Activated CD8-positive, alpha-beta T cell treated with anti-CD3 and anti-CD28 coated beads, Interleukin-2, amount 10 ng/mL, durations not matched to agents 7 days and 5 days (primary cell): ENCODE measurements at regions of chr3 and their contacts with region 1.

Region 1: GRCh38 chr3:45105855-45106671 is 40.1 kb downstream of the CDCP1 start:
- DNase-seq: peak; percentile 91
- ATAC-seq: peak; percentile 85
- H3K4me3 Mint-ChIP-seq: peak overlapping the region; percentile 16
- H3K27ac Mint-ChIP-seq: peak overlapping the region; percentile 83
- H3K4me1 Mint-ChIP-seq: peaks cover 87% of the 10 kb centered on the region
- H3K27me3 Mint-ChIP-seq: peaks cover 8% of the 10 kb centered on the region

Region 2: DNA sequence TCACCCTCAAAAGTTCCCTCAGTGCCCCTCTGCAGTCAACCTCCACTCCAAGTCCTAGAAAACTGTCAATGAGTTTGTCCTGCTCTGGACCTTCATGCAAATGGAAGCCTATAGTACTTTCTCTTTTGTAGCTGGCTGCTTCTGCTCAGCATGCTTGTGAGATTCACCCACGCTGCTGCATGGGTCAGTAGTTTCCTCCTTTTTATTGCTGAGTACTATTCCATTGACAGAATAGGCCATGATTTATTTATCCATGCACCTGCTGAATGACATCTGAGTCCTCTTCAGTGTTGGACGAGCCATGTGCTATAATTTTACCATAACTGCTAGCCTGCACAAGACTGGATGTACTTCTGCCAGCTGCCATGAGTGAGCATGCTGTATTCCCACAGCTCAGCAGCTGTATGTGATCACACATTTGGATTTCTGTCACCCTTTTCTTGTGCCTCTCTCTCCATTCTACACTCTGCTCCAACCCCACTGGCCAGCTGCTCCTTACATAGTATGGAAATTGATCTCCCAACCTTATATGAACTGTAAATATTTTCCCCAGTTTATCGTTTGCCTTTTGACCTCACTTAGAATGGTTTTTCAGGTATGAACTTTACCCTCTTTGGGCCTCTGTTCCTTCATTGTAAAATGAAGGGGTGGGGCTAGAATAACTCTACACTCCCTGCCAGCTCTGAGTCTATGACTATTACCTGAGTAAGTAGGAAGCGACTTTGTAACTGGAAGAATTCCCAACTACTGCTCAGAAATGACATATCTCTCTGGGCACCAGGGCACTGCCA is 14.0 kb after region 1 on chr3:
- CTCF ChIA-PET with region 1: interaction called, 8 read pairs
- POLR2A ChIA-PET with region 1: interaction called, 10 read pairs
- DNase-seq: no peak
- ATAC-seq: no peak
- H3K4me3 Mint-ChIP-seq: no peak overlapping the region
- H3K27ac Mint-ChIP-seq: peak overlapping the region; percentile 37
- H3K4me1 Mint-ChIP-seq: peaks cover 67% of the 10 kb centered on the region
- H3K27me3 Mint-ChIP-seq: peaks cover 20% of the 10 kb centered on the region